ENCODE measurements at regions of chr2 and their contacts with region 1.

Region 1: DNA sequence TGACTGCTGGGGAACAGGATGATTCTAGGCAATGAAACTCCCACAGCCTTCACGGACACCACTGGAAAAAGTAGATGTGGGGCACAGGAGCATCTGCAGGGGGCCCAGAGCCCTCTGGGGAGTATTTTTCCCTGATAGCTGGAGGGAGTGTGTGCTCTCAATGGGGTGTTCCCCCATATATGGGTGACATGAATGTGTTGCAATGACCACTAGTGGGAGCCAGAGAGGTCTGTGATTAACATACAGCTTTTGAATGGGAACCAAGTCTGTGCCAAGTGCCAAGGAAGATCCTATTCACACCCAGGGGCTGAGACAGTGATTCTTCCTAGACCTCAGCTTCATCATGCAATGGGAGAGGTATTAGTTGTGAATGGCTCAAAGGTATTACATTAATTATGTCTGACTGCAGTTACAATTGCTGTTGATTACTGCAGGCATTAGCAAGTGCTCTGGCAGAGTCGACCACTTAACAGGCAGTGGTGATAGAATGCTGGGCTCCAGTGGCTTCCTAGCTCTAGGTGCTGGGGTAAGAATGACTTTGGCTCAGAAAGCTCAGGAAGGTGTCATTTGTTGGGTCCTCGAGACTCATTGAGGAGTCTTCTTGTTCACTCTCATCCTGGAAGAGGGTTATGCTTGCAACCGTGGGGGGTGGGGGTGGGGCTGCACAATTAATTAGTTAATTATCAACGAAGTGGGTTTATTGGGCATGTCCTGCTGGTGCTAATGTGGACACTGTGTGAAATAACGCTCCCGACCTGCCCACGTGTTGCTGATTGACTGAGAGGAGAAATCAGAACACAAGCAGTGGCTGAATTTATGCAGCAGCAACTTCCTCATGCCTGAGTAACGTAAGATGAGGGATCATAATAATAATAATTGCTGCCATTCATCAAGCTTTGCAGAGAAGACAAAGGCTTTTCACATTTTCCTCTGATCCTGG is 194.1 kb downstream of the CLIP4 start:
- DNase-seq: peak; percentile 78
- H3K4me3 ChIP-seq: no peak overlapping the region
- H3K27ac ChIP-seq: peak overlapping the region in 1 of 2 experiments; percentile 93; a peak in 2 of 4 replicates
- H3K4me1 ChIP-seq: peaks cover 7 to 82% of the 10 kb centered on the region in 2 experiments; a peak in 2 of 4 replicates
- H3K27me3 ChIP-seq: no peaks in the 10 kb centered on the region
- CTCF ChIP-seq: peak; percentile 95
- EP300 ChIP-seq: no peak
- RAD21 ChIP-seq: peak; percentile 73

Region 2: DNA sequence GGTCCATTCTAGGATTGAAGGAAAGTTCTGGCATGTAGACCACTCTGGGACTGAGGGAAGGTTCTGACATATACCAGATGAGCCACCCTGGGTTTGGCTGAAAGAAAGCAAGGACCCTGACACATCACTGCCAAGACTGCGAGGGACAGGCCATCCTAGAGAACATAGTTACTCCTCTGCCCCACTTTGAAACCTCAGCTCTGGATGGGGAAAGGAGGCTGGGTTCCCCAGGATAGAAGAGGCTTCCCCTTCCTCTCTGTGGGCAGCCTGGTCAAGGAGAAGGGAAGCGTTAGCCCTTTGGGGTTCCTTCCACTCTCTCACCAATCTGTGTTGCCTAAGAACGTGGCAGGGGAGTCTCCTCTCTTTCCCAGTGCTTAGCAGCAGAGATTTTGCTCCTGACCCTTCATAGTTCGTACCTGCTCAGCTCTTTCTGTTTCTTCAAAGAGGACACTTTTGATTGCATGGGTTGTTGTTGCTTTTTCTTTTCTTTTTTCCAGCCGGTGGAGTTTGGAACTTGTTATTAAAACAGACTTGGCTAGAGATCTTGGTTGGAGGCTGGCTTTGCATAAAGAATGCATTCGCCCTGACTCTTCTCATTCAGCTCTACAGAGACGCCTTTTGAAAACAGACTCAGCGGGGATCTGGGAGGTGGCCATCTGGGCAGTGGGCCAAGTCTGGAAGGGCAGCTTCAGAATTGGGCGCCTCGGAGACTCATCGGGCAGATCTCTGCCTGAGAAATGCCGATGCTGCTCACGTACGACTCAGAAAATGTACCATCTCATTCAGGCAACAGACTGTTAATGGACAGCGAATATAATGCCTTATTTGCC is 28.1 kb before region 1 on chr2:
- CTCF ChIA-PET with region 1: interaction called, 30 read pairs
- POLR2A ChIA-PET with region 1: no interaction called
- DNase-seq: peak; percentile 82
- H3K4me3 ChIP-seq: peak overlapping the region; percentile 21 to 22; a peak in 2 of 4 replicates
- H3K27ac ChIP-seq: peak overlapping the region in 1 of 2 experiments; percentile 97; a peak in 2 of 4 replicates
- H3K4me1 ChIP-seq: peaks cover 3 to 60% of the 10 kb centered on the region in 2 experiments; a peak in 3 of 4 replicates
- H3K27me3 ChIP-seq: peaks cover 7% of the 10 kb centered on the region; the same call in 1 of the 2 replicates
- CTCF ChIP-seq: no peak
- EP300 ChIP-seq: peak in 1 of 2 experiments; percentile 85; a peak in 2 of 4 replicates
- RAD21 ChIP-seq: peak; percentile 49

Region 3: DNA sequence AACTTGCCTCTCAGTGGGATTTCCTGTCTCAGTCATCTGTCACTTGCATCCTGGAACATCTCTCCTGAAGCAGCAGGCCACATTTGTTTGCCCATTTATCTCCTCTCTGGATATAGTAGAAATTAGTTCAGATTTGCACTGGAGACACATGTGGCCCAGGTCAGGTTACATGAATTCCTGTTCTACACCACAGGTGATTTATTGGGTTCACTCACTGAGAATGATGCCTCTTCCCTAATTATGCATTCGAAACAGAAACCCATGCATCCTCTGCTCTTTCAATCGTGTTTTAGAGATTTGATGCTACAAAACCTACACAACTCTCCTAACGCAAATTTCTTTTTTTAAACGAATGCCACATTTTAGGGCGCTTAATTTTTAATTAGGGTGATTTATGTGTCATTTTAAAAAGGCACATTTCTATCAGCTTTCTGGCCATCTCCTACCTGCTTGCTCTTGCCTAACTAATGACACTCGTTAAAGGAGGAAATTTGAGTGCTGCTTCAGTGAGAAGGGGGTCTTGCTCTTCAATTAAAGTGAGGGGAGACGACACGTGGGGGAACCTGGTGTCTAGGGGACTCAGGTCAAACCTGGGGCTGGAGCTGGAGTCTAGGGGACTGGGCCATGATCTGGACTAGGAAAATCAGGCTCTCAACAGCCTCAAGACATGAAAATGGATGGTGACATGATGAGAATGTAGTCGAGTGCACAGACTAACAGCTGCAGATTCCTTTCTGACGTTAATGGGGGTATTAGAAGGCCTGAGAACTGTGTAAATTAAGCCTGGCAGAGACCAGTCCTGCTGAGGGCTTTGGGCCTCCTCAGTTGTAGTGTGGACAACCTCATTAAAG is 27.3 kb after region 1 on chr2:
- CTCF ChIA-PET with region 1: interaction called, 23 read pairs
- POLR2A ChIA-PET with region 1: no interaction called
- DNase-seq: no peak
- H3K4me3 ChIP-seq: no peak overlapping the region
- H3K27ac ChIP-seq: peak overlapping the region in 1 of 2 experiments; percentile 58; a peak in 2 of 4 replicates
- H3K4me1 ChIP-seq: peaks cover 4 to 20% of the 10 kb centered on the region in 2 experiments; a peak in 3 of 4 replicates
- H3K27me3 ChIP-seq: no peaks in the 10 kb centered on the region; the same call in 1 of the 2 replicates
- CTCF ChIP-seq: no peak
- EP300 ChIP-seq: no peak
- RAD21 ChIP-seq: no peak

Region 4: DNA sequence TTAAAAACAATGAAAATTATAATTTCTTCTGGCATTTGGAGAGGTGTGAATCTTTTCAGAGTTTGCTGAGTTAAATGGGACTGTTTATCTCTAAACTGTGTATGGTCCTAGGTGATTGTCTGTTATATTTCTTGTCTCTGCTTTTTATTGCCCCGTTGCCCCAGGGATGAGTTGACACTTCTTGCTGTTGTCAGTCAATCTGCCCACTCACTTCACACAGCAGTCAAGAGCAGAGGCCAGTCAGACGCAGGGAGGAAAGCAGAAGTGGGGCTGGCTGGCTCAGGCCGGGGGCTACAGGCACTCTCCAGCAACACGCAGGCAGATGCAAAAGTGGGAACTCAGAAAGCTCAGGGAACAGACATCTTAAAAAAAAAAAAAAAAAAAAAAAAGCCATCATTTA is 171.1 kb after region 1 on chr2:
- CTCF ChIA-PET with region 1: interaction called, 22 read pairs
- POLR2A ChIA-PET with region 1: no interaction called
- DNase-seq: peak; percentile 73
- H3K4me3 ChIP-seq: no peak overlapping the region
- H3K27ac ChIP-seq: peak overlapping the region in 1 of 2 experiments; percentile 100; a peak in 2 of 4 replicates
- H3K4me1 ChIP-seq: peaks cover 0 to 65% of the 10 kb centered on the region in 2 experiments; a peak in 2 of 4 replicates
- H3K27me3 ChIP-seq: no peaks in the 10 kb centered on the region
- CTCF ChIP-seq: no peak
- EP300 ChIP-seq: peak in 1 of 2 experiments; percentile 96; a peak in 2 of 4 replicates
- RAD21 ChIP-seq: peak; percentile 49

Region 5: GRCh38 chr2:29583088-29583487 is 273.7 kb after region 1 on chr2:
- CTCF ChIA-PET with region 1: interaction called, 15 read pairs
- POLR2A ChIA-PET with region 1: no interaction called
- DNase-seq: no peak
- H3K4me3 ChIP-seq: no peak overlapping the region; a peak in 1 of 4 replicates
- H3K27ac ChIP-seq: peak overlapping the region in 1 of 2 experiments; percentile 100; a peak in 2 of 4 replicates
- H3K4me1 ChIP-seq: peaks cover 9 to 80% of the 10 kb centered on the region in 2 experiments; a peak in 2 of 4 replicates
- H3K27me3 ChIP-seq: peaks cover 16% of the 10 kb centered on the region; the same call in 1 of the 2 replicates
- CTCF ChIP-seq: no peak
- EP300 ChIP-seq: no peak
- RAD21 ChIP-seq: no peak

Measured in SK-N-SH (cell line).